Heart right ventricle (tissue), 16 donors: ENCODE measurements at regions of chr16 and their contacts with region 1.

Region 1: GRCh38 chr16:17585449-17586074 is 114.8 kb upstream of the XYLT1 start:
- DNase-seq: no peak
- ATAC-seq: no peak
- H3K4me3 ChIP-seq: no peak overlapping the region
- H3K27ac ChIP-seq: no peak overlapping the region
- H3K4me1 ChIP-seq: no peaks in the 10 kb centered on the region
- H3K27me3 ChIP-seq: peaks cover 0 to 8% (median 0%) of the 10 kb centered on the region in 7 donors
- CTCF ChIP-seq: no peak

Region 2: GRCh38 chr16:17511340-17511739 is 74.2 kb before region 1 on chr16:
- intact Hi-C with region 1: no loop called
- DNase-seq: no peak
- ATAC-seq: peak in 4 of 8 donors; percentile 25 to 61 (median 48)
- H3K4me3 ChIP-seq: no peak overlapping the region
- H3K27ac ChIP-seq: no peak overlapping the region
- H3K4me1 ChIP-seq: no peaks in the 10 kb centered on the region
- H3K27me3 ChIP-seq: peaks cover 0 to 7% (median 4%) of the 10 kb centered on the region in 7 donors
- CTCF ChIP-seq: no peak

Region 3: DNA sequence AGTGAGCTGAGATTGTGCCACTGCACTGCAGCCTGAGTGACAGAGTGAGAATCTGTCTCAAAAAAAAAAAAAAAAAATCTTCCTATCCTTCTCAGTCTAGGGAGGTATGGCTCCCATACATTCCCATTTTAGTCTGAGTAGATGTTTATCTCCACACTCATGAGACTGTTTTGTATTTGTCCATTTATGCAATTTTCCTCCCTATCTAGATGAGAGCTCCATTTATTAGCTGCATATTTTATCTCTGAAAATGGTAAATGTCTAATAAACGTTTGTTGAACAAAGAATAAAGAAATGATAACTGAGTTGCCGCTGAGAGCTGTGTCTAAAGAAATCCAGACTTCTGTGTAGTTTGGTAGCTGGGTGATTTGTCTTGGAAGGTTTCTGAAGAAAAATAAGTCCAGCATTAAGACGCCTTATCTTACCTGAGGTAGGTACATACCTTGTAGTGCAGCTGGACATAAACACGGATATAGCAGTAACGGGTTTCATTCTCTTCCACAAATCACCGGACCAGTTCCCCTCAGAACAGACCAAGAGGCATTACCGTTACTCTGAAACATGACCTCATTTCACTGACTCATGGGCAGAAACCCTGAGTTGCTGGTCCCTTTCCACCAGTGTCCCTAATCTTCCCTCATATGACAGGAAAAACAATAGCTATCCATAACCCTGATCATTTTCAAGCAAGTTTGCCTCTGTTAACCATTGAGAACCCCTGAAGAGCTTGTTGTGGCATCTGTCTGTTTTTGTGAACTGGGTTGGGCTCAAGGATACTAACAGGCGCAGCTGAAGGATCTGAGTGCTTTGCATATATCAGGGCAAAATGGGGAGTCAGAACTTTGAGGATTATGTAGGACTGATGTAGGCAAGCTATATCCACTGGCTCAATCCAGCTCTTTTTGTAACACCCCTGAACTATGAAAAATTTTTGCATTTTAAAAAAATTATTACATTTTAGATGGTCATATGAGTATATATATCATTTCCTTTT is 62.6 kb after region 1 on chr16:
- intact Hi-C with region 1: loop called in 1 of 10 experiments (anchors 10 kb)
- DNase-seq: no peak
- ATAC-seq: no peak
- H3K4me3 ChIP-seq: no peak overlapping the region
- H3K27ac ChIP-seq: no peak overlapping the region
- H3K4me1 ChIP-seq: no peaks in the 10 kb centered on the region
- H3K27me3 ChIP-seq: peaks cover 0 to 34% (median 9%) of the 10 kb centered on the region in 7 donors
- CTCF ChIP-seq: no peak